Cardiac septum (tissue), 1 donor: ENCODE measurements at regions of chr17 and their contacts with region 1.

Region 1: GRCh38 chr17:59331129-59331928 is at the start of gene YPEL2:
- DNase-seq: peak; percentile 99
- total RNA-seq, gene YPEL2: 59.4 TPM

Region 2: GRCh38 chr17:59287452-59287851 is 43.9 kb before region 1 on chr17:
- intact Hi-C with region 1: no loop called
- DNase-seq: no peak

Region 3: GRCh38 chr17:59372138-59372857 is 41.0 kb after region 1 on chr17:
- intact Hi-C with region 1: loop called (anchors 2 kb)
- DNase-seq: no peak

Region 4: DNA sequence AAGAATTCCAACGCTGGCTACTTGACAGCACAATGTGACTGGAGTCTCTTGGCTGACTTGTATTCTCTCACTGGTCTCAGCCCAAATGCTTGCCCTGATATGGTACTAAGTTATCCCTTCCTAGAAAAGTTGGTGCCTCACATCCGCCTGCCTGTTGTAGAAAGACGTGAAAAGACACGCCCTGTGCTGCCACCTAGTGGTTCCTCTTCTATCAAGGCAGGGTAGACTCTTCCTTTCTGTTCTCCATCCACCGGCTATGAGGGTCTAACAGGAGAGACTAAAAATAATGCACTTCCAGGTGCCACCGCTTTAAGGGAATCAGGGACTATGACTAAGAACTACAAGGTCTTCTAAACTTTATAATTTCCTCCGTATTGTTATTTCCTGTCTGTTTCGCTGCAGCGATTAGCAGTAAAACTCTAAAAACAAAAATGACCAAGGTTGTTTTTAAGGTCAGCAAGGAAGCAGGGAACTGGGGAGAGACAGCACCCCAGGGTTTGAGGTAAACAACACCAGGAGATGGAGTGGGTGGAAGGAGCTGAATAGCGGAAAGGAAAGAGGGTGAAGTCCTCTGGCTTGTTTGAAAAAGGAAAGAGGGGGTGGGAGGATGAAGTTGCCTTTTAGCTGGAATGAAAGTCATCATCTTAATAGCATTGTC is 109.6 kb after region 1 on chr17:
- intact Hi-C with region 1: loop called (anchors 1 kb)
- DNase-seq: peak; percentile 93

Region 5: GRCh38 chr17:59451706-59452105 is 120.4 kb after region 1 on chr17:
- intact Hi-C with region 1: no loop called
- DNase-seq: no peak